Calu3 (cell line): ENCODE measurements at regions of chr5 and their contacts with region 1.

Region 1: GRCh38 chr5:60960591-60960990 is 15.6 kb downstream of the NDUFAF2 start:
- DNase-seq: no peak
- H3K4me3 Mint-ChIP-seq: no peak overlapping the region
- H3K27ac Mint-ChIP-seq: no peak overlapping the region
- H3K4me1 Mint-ChIP-seq: no peaks in the 10 kb centered on the region
- H3K27me3 Mint-ChIP-seq: no peaks in the 10 kb centered on the region
- CTCF ChIP-seq: peak; percentile 39

Region 2: GRCh38 chr5:61139100-61139873 is 178.7 kb after region 1 on chr5:
- CTCF ChIA-PET with region 1: interaction called, 3 read pairs
- intact Hi-C with region 1: loop called (anchors 10 kb)
- DNase-seq: no peak
- H3K4me3 Mint-ChIP-seq: no peak overlapping the region
- H3K27ac Mint-ChIP-seq: no peak overlapping the region
- H3K4me1 Mint-ChIP-seq: peaks cover 14% of the 10 kb centered on the region
- H3K27me3 Mint-ChIP-seq: no peaks in the 10 kb centered on the region
- CTCF ChIP-seq: no peak

Region 3: GRCh38 chr5:61342071-61342501 is 381.5 kb after region 1 on chr5:
- CTCF ChIA-PET with region 1: no interaction called
- intact Hi-C with region 1: loop called (anchors 5 kb)
- DNase-seq: no peak
- H3K4me3 Mint-ChIP-seq: no peak overlapping the region
- H3K27ac Mint-ChIP-seq: no peak overlapping the region
- H3K4me1 Mint-ChIP-seq: peaks cover 13% of the 10 kb centered on the region
- H3K27me3 Mint-ChIP-seq: no peaks in the 10 kb centered on the region
- CTCF ChIP-seq: no peak